GM18951 (cell line): ENCODE measurements at regions of chr2 and their contacts with region 1.

Region 1: DNA sequence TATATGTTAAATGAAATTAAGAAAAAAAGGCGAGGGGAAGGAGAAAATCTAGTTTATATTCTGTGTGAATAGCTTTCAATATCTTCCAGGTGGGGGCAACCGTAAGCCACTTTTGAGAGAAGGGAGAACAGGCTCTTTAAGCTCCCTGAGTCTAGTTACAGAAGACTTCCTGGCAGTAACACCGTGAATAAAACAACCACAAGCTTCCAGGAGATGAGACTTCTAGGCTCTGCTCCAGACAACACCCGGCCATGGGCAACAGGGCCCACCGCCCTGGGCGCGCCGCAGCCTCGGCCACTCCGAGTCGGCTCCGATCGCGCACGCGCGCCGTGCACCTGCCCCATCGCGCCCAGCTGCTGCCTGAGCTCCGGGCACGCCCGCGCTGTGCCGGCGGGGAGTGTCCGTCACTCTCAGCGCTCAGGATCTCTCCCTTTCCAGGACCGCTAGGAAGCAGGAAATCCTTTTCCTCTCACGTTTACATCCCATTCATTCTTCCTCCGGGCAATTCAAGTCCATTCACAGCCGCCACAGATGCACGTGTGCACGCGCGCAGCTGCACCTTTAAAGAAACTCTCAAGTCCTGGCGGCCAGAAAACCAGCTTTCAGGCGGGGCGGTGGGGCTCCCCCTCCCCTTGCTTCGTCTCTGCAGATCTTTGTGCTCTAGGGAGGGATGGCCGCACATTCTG is 19.4 kb upstream of the PAX3 start:
- POLR2A ChIP-seq: peak; percentile 32

Region 2: DNA sequence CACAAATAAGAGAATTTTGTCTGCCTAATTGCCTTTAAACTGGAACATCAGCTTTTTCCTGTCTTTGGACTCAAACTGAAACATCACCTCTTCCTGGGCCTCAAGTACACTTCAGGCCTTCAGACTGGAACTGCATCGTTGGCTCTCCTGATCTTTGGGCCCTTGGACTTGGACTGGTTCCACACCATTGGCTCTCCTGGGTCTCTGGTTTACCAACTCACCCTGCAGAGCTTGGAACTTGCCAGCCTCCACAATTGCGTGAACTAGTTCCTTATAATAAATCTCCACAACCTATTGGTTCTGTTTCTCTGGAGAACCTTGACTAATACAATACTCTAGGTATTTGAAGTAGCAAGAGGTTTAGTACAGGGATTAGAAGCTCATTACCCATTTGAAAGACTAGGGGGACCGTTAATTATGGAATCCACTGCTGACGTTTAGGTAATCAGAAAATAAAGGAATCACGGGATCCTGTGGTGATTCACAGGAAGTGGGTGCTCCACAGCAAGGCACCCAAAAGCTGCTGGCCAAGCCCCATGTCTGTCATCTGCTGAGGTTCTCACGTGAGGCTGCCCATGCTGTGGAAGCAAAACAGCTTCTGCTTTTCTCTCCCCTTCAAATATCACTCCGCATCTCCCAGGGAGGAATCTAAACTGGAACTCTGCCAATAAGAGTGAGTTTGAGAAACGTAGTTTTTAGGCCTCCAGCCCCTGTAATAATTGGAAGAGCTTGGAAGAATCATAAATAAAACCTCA is 86.2 kb after region 1 on chr2:
- in situ Hi-C with region 1: no loop called
- POLR2A ChIP-seq: no peak

Region 3: DNA sequence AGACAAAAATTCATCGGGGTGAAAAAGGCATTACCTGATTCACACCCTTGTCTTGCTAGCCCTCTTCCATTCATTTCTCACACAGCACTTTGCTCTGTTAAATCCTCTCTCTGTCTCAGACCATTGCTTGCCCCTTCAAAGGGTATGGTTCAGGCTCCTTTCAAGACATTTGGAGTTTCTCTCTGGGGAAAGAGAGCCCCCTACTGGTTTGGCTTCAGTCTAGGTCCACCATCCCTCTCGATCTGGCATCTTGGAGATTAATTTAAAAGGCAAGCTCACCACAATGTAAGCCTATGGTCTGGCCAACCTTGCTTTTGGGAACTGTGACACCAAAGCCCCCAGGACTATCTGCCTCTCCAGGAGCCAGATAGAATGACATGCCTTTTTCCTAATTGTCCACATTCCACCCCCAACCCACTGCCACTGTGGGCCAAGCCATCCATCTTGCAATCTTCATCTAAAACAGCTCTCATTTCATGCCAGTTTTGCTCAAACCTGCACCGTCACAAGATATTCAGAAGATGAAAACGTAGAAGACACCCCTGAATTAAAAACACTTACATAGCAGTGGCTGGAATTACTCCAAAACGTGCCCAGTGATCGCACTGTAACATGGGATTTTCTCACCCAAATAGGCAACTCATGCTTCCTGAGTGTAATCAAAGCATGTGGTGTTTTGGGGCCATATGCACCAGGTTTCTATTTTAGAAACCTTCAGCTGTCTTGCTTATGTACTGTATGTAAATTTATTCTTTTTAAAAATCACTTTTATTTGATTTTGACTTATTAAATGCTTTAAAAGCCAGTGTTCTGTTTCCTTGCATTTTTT is 243.9 kb after region 1 on chr2:
- in situ Hi-C with region 1: loop called (anchors 10 kb)
- POLR2A ChIP-seq: no peak